ENCODE measurements at regions of chr4 and their contacts with region 1.

Region 1: GRCh38 chr4:144754562-144755410 is 108.8 kb downstream of the HHIP start:
- DNase-seq: no peak
- H3K4me3 ChIP-seq: no peak overlapping the region
- CTCF ChIP-seq: peak; percentile 56

Region 2: GRCh38 chr4:144557404-144557803 is 197.4 kb before region 1 on chr4:
- CTCF ChIA-PET with region 1: interaction called, 12 read pairs
- POLR2A ChIA-PET with region 1: no interaction called
- DNase-seq: no peak
- H3K4me3 ChIP-seq: no peak overlapping the region
- CTCF ChIP-seq: no peak

Region 3: GRCh38 chr4:144734522-144734921 is 20.3 kb before region 1 on chr4:
- CTCF ChIA-PET with region 1: no interaction called
- POLR2A ChIA-PET with region 1: no interaction called
- DNase-seq: no peak
- H3K4me3 ChIP-seq: no peak overlapping the region
- CTCF ChIP-seq: no peak